Activated CD4-positive, alpha-beta T cell treated with anti-CD3 and anti-CD28 coated beads for 36 hours (primary cell): ENCODE measurements at regions of chr1 and their contacts with region 1.

Region 1: GRCh38 chr1:40818264-40818961 is 34.8 kb downstream of the KCNQ4 start:
- DNase-seq: peak; percentile 93
- ATAC-seq: peak; percentile 99
- H3K4me3 Mint-ChIP-seq: peak overlapping the region; percentile 67
- H3K27ac Mint-ChIP-seq: peak overlapping the region; percentile 37
- H3K4me1 Mint-ChIP-seq: peaks cover 17% of the 10 kb centered on the region
- H3K27me3 Mint-ChIP-seq: no peaks in the 10 kb centered on the region

Region 2: DNA sequence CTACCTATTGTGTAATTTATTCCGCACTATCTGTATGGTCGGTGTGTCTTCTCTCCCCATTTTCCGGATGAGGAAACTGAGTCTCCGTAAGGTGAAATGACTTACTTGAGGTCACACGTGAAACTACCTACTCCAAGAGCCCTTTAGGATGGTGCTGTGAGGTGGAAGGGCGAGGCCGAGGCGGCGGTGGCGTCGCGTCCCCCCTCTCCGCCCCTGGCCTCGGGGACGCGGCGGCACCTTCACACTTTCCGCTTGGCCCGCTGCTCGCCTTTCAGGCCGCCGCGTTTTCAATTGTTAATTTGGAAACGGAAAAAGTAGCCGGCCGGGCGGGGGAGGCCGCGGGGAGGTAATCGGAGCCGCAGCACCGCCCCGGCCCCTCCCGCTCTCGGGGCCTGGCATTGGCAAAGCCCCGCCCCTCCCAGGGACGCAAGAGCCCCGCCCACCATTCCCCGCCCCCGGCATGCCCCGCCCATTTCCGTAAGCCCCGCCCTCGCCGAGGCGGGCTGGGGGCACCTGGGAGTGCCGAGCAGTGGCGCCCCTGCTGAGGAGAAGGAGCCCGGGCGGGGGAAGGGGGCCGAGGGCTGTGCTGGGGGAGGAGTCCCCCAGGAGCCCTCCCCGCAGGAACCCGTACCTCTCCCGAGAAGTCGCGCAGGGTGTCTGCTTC is 16.2 kb before region 1 on chr1:
- CTCF ChIA-PET with region 1: no interaction called
- POLR2A ChIA-PET with region 1: interaction called, 3 read pairs
- intact Hi-C with region 1: loop called (anchors 1 kb)
- DNase-seq: peak; percentile 93
- ATAC-seq: peak; percentile 95
- H3K4me3 Mint-ChIP-seq: peak overlapping the region; percentile 48
- H3K27ac Mint-ChIP-seq: no peak overlapping the region
- H3K4me1 Mint-ChIP-seq: peaks cover 25% of the 10 kb centered on the region
- H3K27me3 Mint-ChIP-seq: no peaks in the 10 kb centered on the region